ENCODE measurements at regions of chr1 and their contacts with region 1.

Region 1: GRCh38 chr1:52686830-52687229 is 11.3 kb downstream of the COA7 start:
- DNase-seq: no peak
- H3K4me3 ChIP-seq: no peak overlapping the region
- CTCF ChIP-seq: no peak

Region 2: DNA sequence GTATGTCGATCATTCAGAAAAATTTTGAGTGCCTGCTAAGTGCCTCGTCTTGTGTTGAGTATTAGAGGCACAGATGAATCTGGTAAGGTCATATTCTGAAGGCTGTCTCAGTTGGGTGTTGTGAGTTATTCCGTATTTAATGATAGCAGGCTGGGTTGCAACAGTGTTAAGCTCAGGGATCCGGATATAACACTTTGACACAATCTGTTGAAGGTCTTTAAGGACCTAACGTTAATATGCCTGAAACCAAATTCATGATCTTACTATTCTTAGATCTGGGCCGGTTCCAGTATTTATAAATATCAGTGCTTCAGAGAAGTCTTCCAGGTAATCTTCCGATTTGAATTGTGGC is 281.9 kb before region 1 on chr1:
- CTCF ChIA-PET with region 1: interaction called, 10 read pairs
- POLR2A ChIA-PET with region 1: no interaction called
- DNase-seq: no peak
- H3K4me3 ChIP-seq: peak overlapping the region; percentile 99
- CTCF ChIP-seq: no peak

Region 3: DNA sequence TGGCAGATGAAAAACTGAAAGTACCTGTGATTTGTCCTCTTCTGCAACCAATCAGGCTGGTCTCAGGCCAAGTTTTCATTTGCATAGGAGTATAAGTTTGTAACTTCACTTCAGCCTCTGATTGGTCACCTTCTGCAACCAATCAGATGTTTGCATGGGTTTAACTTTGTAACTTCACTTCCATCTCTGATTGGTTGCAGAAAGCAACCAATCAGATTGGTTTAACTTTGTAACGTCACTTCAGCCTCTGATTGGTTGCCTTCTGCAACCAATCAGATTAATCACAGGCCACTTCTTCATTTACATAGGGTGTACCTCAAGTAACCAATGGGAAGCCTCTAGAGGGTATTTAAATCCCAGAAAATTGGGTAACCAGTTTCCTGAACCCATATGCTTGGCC is 115.0 kb before region 1 on chr1:
- CTCF ChIA-PET with region 1: no interaction called
- POLR2A ChIA-PET with region 1: no interaction called
- DNase-seq: no peak
- H3K4me3 ChIP-seq: no peak overlapping the region
- CTCF ChIP-seq: no peak

Region 4: GRCh38 chr1:52665006-52665941 is 21.6 kb before region 1 on chr1:
- CTCF ChIA-PET with region 1: interaction called, 17 read pairs
- POLR2A ChIA-PET with region 1: no interaction called
- DNase-seq: no peak
- H3K4me3 ChIP-seq: no peak overlapping the region
- CTCF ChIP-seq: no peak

Region 5: DNA sequence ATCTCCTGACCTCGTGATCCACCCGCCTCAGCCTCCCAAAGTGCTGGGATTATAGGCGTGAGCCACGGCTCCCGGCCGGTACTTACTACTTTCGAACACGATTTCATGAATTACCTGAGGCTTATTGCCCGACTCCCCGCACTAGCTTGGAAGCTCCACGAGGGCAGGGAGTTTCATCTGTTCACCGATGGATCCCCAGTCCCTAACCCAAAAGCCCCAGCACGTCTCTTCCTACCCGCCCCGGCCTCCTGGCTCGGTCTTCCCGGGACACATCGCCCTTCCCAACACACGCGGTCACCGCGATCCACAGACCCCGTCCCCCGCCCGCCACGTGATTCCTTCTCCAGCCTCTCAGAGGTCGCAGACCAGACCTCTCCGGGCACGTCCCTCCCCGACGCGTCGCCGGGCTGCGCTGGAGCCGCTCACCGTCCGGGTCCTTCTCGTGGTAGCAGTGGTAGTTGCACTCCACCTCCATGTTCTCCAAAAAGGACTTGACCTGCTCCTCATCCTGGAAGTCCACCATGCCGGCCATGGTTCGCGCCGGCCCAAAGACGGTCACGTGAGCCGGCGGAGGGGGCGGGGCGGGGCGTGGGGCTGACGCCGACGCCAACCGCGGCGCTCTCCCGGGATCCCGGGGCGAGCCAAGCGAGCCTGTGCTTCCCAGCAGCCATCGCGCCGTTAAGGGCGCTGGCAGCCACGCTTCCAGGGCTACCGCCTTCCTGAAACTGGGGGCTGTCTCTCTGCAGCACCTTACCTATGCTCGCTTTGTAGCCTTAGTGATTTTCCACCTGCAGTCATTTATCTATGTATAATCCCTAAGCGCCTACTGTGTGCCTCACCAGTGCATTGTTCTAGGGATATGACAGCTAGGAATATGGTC is 11.2 kb after region 1 on chr1 and contains the start of gene COA7:
- CTCF ChIA-PET with region 1: interaction called, 36 read pairs
- POLR2A ChIA-PET with region 1: no interaction called
- DNase-seq: no peak
- H3K4me3 ChIP-seq: peak within 1 kb of the TSS; percentile 93
- CTCF ChIP-seq: no peak

Region 6: DNA sequence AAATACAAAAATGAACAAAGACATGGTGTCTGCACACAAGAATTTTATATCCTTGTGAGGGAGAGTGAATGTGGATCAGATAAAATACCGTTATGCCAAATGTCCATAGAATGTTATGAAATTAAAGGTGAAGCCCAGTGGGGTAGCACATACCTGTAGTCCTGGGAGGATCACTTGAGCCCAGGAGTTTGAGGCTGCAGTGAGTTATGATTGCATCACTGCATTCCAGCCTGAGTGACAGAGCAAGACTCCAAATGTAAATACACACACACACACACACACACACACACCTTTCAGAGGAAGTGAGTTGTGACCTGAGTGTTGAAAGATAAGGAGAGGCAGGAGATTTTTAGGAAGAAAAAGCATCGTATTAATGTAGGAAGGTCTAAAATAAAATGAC is 127.6 kb after region 1 on chr1:
- CTCF ChIA-PET with region 1: no interaction called
- POLR2A ChIA-PET with region 1: no interaction called
- DNase-seq: no peak
- H3K4me3 ChIP-seq: no peak overlapping the region
- CTCF ChIP-seq: no peak

Measured in AG04449 (cell line).